Endothelial cell of umbilical vein (primary cell): ENCODE measurements at regions of chr22 and their contacts with region 1.

Region 1: GRCh38 chr22:27238935-27239510 is 562.5 kb downstream of the MN1 start:
- DNase-seq: peak; percentile 99
- H3K4me3 ChIP-seq: no peak overlapping the region
- H3K27ac ChIP-seq: peak overlapping the region; percentile 96
- H3K4me1 ChIP-seq: peaks cover 44% of the 10 kb centered on the region
- H3K27me3 ChIP-seq: no peaks in the 10 kb centered on the region
- CTCF ChIP-seq: no peak
- POLR2A ChIP-seq: peak; percentile 92

Region 2: DNA sequence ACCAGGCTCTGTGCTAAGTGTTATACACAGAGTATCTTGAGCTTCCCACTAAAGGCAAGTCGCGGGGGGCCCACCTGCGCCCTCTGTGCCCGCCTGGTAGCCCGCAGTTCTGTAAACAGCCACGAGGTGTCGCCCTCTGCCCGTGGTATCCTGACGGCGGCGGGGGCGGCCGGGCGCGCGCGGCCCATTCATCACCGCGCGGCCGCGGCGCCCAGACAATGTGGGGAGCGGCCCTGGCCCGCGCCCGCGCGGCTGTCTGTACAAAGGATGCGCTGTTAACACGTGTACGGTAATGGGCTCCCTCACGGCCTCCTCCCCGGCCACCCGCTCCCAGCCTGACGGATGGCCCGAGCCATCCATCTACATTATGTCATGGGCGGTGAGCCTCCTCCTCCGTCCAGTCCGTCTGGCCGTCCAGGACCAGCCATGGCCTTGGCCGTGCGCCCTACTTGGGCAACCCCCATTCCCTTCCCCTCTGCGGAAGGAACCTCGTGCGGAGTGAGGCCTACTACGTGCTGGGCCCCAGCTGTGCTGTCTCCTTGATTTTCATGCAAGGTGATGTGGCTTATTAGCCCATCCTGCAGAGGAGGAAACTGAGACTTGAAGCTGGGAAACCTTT is 482.2 kb before region 1 on chr22:
- CTCF ChIA-PET with region 1: no interaction called
- POLR2A ChIA-PET with region 1: no interaction called
- dilution Hi-C with region 1: no loop called
- intact Hi-C with region 1: loop called (anchors 10 kb)
- DNase-seq: peak; percentile 46
- H3K4me3 ChIP-seq: peak overlapping the region in 2 of 3 experiments; percentile 13 to 29
- H3K27ac ChIP-seq: no peak overlapping the region
- H3K4me1 ChIP-seq: peaks cover 5% of the 10 kb centered on the region
- H3K27me3 ChIP-seq: no peaks in the 10 kb centered on the region
- CTCF ChIP-seq: peak; percentile 75 to 88
- POLR2A ChIP-seq: no peak

Region 3: GRCh38 chr22:27134315-27134701 is 104.7 kb before region 1 on chr22:
- CTCF ChIA-PET with region 1: no interaction called
- POLR2A ChIA-PET with region 1: no interaction called
- dilution Hi-C with region 1: no loop called
- intact Hi-C with region 1: loop called (anchors 5 kb)
- DNase-seq: peak; percentile 60
- H3K4me3 ChIP-seq: no peak overlapping the region
- H3K27ac ChIP-seq: peak overlapping the region; percentile 52
- H3K4me1 ChIP-seq: peaks cover 30% of the 10 kb centered on the region
- H3K27me3 ChIP-seq: no peaks in the 10 kb centered on the region
- CTCF ChIP-seq: no peak
- POLR2A ChIP-seq: no peak

Region 4: GRCh38 chr22:27203276-27203660 is 35.8 kb before region 1 on chr22:
- CTCF ChIA-PET with region 1: no interaction called
- POLR2A ChIA-PET with region 1: no interaction called
- dilution Hi-C with region 1: no loop called
- intact Hi-C with region 1: loop called (anchors 1 kb)
- DNase-seq: no peak
- H3K4me3 ChIP-seq: no peak overlapping the region
- H3K27ac ChIP-seq: peak overlapping the region; percentile 29
- H3K4me1 ChIP-seq: peaks cover 12% of the 10 kb centered on the region
- H3K27me3 ChIP-seq: no peaks in the 10 kb centered on the region
- CTCF ChIP-seq: no peak
- POLR2A ChIP-seq: no peak

Region 5: DNA sequence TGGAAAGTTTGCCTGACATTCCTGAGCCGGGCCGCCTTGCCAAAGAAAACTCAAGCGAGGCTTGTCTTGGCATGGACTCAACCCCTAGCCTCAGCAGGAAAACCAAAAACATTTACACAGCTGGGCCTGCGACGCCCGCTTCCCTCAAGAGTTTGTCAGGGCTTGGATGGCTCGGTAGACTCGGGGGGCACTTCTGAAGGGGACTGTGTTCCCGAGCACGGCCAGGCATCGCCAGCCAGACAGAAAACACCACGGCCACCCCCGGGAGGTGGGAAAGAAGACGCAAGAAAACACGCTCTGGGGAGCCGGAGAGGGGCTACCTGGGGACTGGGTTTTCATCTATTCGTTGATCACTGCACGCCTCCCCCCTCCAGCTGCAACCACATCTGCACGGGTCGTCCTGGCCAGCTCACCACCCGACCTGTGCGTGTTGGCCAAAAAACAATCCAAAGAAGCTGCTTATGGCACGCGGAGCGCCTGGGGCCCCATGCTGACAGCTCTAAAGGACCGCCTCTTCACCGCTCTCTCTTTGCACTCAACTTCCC is 181.9 kb after region 1 on chr22:
- CTCF ChIA-PET with region 1: interaction called, 3 read pairs
- POLR2A ChIA-PET with region 1: interaction called, 5 read pairs
- dilution Hi-C with region 1: no loop called
- intact Hi-C with region 1: loop called (anchors 1 kb)
- DNase-seq: peak; percentile 98
- H3K4me3 ChIP-seq: no peak overlapping the region
- H3K27ac ChIP-seq: peak overlapping the region; percentile 97
- H3K4me1 ChIP-seq: peaks cover 43% of the 10 kb centered on the region
- H3K27me3 ChIP-seq: peaks cover 0 to 2% of the 10 kb centered on the region in 2 experiments
- CTCF ChIP-seq: no peak
- POLR2A ChIP-seq: peak; percentile 38